Endothelial cell of umbilical vein (primary cell): ENCODE measurements at regions of chr10 and their contacts with region 1.

Region 1: DNA sequence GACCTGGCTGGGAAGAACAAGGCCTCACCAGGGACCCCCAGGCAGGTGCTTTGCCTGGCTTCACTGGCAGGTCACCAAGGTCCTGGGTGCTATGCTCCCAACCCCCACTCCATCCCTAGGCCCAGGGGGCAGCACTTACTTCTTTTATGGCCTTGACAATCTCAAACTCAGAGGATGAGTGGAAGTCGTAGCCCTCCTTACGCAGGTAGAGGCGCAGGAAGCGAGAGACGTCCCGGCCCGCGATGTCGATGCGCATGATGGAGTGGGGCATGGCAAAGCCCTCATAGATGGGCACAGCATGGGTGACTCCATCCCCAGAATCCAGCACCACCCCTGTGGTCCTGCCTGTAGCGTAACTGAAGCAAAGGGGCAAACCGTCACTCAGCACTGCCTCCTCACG is 18.5 kb downstream of the ACTR1A start:
- DNase-seq: no peak
- H3K4me3 ChIP-seq: no peak overlapping the region
- H3K27ac ChIP-seq: no peak overlapping the region
- H3K4me1 ChIP-seq: no peaks in the 10 kb centered on the region
- H3K27me3 ChIP-seq: no peaks in the 10 kb centered on the region
- CTCF ChIP-seq: no peak
- POLR2A ChIP-seq: no peak

Region 2: GRCh38 chr10:101704331-101704730 is 779.7 kb before region 1 on chr10:
- CTCF ChIA-PET with region 1: no interaction called
- POLR2A ChIA-PET with region 1: no interaction called
- dilution Hi-C with region 1: no loop called
- intact Hi-C with region 1: no loop called
- DNase-seq: no peak
- H3K4me3 ChIP-seq: no peak overlapping the region
- H3K27ac ChIP-seq: no peak overlapping the region
- H3K4me1 ChIP-seq: peaks cover under 1% of the 10 kb centered on the region
- H3K27me3 ChIP-seq: peaks cover 13 to 20% of the 10 kb centered on the region in 2 experiments
- CTCF ChIP-seq: no peak
- POLR2A ChIP-seq: no peak

Region 3: GRCh38 chr10:102461187-102462054 is 22.6 kb before region 1 on chr10:
- CTCF ChIA-PET with region 1: interaction called, 16 read pairs
- POLR2A ChIA-PET with region 1: no interaction called
- dilution Hi-C with region 1: no loop called
- intact Hi-C with region 1: no loop called
- DNase-seq: peak; percentile 78
- H3K4me3 ChIP-seq: peak overlapping the region; percentile 44 to 55 (median 50)
- H3K27ac ChIP-seq: no peak overlapping the region
- H3K4me1 ChIP-seq: peaks cover 7% of the 10 kb centered on the region
- H3K27me3 ChIP-seq: peaks cover 0 to 4% of the 10 kb centered on the region in 2 experiments
- CTCF ChIP-seq: no peak
- POLR2A ChIP-seq: no peak